GM12878 (cell line): ENCODE measurements at regions of chr20 and their contacts with region 1.

Region 1: GRCh38 chr20:3993109-3993508 is 22.2 kb downstream of the RNF24 start:
- DNase-seq: no peak
- ATAC-seq: peak; percentile 90
- H3K4me3 ChIP-seq: no peak overlapping the region
- H3K27ac ChIP-seq: no peak overlapping the region
- H3K4me1 ChIP-seq: peaks cover 32% of the 10 kb centered on the region
- H3K27me3 ChIP-seq: no peaks in the 10 kb centered on the region
- CTCF ChIP-seq: no peak
- EP300 ChIP-seq: no peak
- POLR2A ChIP-seq: no peak
- RAD21 ChIP-seq: no peak

Region 2: GRCh38 chr20:3980260-3981131 is 12.6 kb before region 1 on chr20:
- CTCF ChIA-PET with region 1: interaction called, 9 read pairs
- POLR2A ChIA-PET with region 1: interaction called, 10 read pairs
- RAD21 ChIA-PET with region 1: interaction called, 7 read pairs
- SMC1A ChIA-PET with region 1: interaction called, 19 read pairs
- in situ Hi-C with region 1: no loop called
- intact Hi-C with region 1: no loop called
- DNase-seq: no peak
- ATAC-seq: peak; percentile 87
- H3K4me3 ChIP-seq: peak overlapping the region; percentile 30
- H3K27ac ChIP-seq: peak overlapping the region; percentile 42; the same call in 1 of the 2 replicates
- H3K4me1 ChIP-seq: peaks cover 6% of the 10 kb centered on the region; the same call in 1 of the 2 replicates
- H3K27me3 ChIP-seq: no peaks in the 10 kb centered on the region
- CTCF ChIP-seq: no peak
- EP300 ChIP-seq: no peak
- POLR2A ChIP-seq: no peak
- RAD21 ChIP-seq: no peak